Activated T-helper 1 cell treated with anti-CD3 and anti-CD28 coated beads, Interleukin-12 subunit alpha, Interleukin-12 subunit beta, Interleukin-2, Interleukin-4 antibody, amounts not matched to agents 30 ng/mL and 10 ng/mL and 1 ng/mL, durations not matched to agents 14 hours and 24 hours and 36 hours (primary cell): ENCODE measurements at regions of chr14 and their contacts with region 1.

Region 1: GRCh38 chr14:69153131-69153872 is 383 bp upstream of the DCAF5 start:
- DNase-seq: peak; percentile 90
- H3K4me3 Mint-ChIP-seq: peak overlapping the region; percentile 90
- H3K27ac Mint-ChIP-seq: peak overlapping the region; percentile 92
- H3K4me1 Mint-ChIP-seq: peaks cover 33% of the 10 kb centered on the region
- H3K27me3 Mint-ChIP-seq: peaks cover 39% of the 10 kb centered on the region

Region 2: DNA sequence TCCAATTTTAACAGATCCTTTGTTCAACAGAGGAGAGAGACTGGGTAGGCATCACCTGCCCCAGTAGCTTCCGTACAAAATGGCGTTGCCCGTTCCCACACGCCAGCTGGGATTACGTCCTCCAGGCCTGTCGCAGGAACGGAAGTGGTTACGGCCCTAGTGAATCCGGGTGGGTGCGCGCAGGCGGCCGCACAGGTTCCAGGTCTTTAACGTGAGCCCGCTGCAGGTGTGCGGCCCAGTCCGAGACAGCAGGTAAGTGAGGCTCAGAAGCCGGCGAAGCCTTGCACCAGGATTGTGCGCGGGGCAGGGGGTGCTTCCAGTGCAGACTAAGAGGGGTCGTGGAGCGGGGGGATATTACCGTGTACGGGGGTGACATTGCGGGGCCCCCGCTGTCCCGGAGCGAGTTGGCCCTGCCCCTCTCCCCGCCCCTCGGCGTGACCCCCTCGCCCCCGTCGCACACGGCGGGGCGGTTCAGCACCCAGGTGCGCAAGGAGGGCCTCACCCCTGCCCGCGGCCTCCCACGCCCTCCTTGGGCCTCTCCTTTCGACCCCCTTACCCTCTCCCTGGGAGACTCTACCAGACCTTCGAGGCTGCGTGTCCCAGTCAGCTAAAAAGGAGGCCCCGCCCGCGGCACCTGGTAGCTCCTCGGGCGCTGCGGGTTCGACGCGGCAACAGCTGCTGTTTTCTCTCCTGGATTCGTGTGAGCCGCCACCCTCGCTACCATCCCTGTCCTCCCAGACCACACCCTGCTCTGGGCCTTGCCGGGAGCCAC is 38.2 kb after region 1 on chr14 and contains the start of gene EXD2:
- intact Hi-C with region 1: loop called (anchors 1 kb)
- DNase-seq: peak; percentile 45
- H3K4me3 Mint-ChIP-seq: peak within 1 kb of the TSS; percentile 89
- H3K27ac Mint-ChIP-seq: peak within 1 kb of the TSS; percentile 82
- H3K4me1 Mint-ChIP-seq: peaks cover 36% of the 10 kb centered on the region
- H3K27me3 Mint-ChIP-seq: peaks cover 2% of the 10 kb centered on the region
- total RNA-seq, gene EXD2: 6.3 and 6.5 TPM in 2 replicates